ENCODE measurements at regions of chr11 and their contacts with region 1.

Region 1: GRCh38 chr11:61516675-61517572 is 8.4 kb downstream of the LRRC10B start:
- DNase-seq: no peak
- ATAC-seq: peak; percentile 87
- H3K4me3 ChIP-seq: no peak overlapping the region
- H3K27ac ChIP-seq: no peak overlapping the region
- H3K4me1 ChIP-seq: no peaks in the 10 kb centered on the region
- H3K27me3 ChIP-seq: no peaks in the 10 kb centered on the region
- CTCF ChIP-seq: peak; percentile 88 to 99 (median 97)
- EP300 ChIP-seq: no peak
- POLR2A ChIP-seq: no peak
- RAD21 ChIP-seq: peak; percentile 79

Region 2: DNA sequence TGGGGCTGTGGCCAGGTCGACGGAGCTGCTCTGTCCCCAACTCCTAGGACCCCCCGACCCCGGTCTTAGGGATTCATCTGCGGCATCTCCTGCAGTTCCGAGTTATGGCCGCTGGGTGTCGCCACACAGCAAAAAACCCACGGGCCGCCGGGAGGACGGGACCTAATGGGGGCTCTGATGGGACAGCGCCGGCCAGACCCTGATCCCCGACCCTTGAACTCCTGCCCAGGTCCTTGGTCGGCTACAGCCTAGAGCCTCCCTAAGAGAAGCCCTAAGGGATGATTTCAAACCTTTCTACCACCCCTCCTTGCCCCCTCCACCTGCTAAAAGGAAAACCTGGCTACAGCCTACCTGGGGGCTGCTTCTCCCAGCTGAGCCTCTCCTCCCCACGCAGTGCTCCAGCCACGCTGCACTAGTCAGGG is 39.2 kb before region 1 on chr11:
- CTCF ChIA-PET with region 1: interaction called, 67 read pairs
- POLR2A ChIA-PET with region 1: no interaction called
- RAD21 ChIA-PET with region 1: interaction called, 12 read pairs
- SMC1A ChIA-PET with region 1: interaction called, 10 read pairs
- in situ Hi-C with region 1: no loop called
- intact Hi-C with region 1: loop called (anchors 1 kb)
- DNase-seq: no peak
- ATAC-seq: peak; percentile 72
- H3K4me3 ChIP-seq: no peak overlapping the region
- H3K27ac ChIP-seq: no peak overlapping the region
- H3K4me1 ChIP-seq: no peaks in the 10 kb centered on the region
- H3K27me3 ChIP-seq: no peaks in the 10 kb centered on the region
- CTCF ChIP-seq: peak; percentile 86 to 95 (median 89)
- EP300 ChIP-seq: no peak
- POLR2A ChIP-seq: no peak
- RAD21 ChIP-seq: peak; percentile 82

Region 3: DNA sequence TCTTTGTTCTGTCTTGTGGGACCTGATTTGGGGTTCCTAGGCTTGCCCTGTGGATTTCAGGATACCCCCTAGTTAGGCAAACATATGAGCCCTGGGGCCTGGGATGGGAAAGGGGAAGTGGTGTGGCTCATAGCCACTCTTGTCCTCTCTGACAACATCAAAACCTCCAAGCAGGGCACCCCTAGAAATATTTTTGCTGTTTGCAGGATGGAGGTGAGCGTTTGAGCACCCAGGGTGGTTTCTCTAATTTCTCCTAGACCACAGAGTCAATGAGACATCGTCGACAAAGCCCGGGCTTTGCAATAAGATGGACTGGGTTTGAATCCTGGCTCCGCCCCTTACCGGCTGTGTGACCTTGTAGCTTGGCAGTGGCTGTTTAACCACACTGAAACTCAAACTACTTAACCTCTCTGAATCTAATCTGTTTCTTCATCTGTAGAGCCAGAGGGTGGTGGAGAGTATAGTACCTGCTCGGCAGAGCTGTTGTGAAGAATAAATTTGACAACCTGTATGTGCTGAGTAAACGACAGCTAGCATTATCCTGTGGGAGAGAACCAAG is 13.6 kb before region 1 on chr11:
- CTCF ChIA-PET with region 1: interaction called, 15 read pairs
- POLR2A ChIA-PET with region 1: no interaction called
- RAD21 ChIA-PET with region 1: no interaction called
- SMC1A ChIA-PET with region 1: interaction called, 3 read pairs
- in situ Hi-C with region 1: no loop called
- intact Hi-C with region 1: no loop called
- DNase-seq: no peak
- ATAC-seq: no peak
- H3K4me3 ChIP-seq: no peak overlapping the region
- H3K27ac ChIP-seq: no peak overlapping the region
- H3K4me1 ChIP-seq: no peaks in the 10 kb centered on the region
- H3K27me3 ChIP-seq: peaks cover 6 to 9% of the 10 kb centered on the region in 2 experiments
- CTCF ChIP-seq: no peak
- EP300 ChIP-seq: no peak
- POLR2A ChIP-seq: no peak
- RAD21 ChIP-seq: no peak

Region 4: GRCh38 chr11:61526956-61527731 is 10.2 kb after region 1 on chr11:
- CTCF ChIA-PET with region 1: interaction called, 19 read pairs
- POLR2A ChIA-PET with region 1: no interaction called
- RAD21 ChIA-PET with region 1: no interaction called
- SMC1A ChIA-PET with region 1: interaction called, 6 read pairs
- in situ Hi-C with region 1: no loop called
- intact Hi-C with region 1: no loop called
- DNase-seq: no peak
- ATAC-seq: no peak
- H3K4me3 ChIP-seq: no peak overlapping the region
- H3K27ac ChIP-seq: no peak overlapping the region
- H3K4me1 ChIP-seq: no peaks in the 10 kb centered on the region
- H3K27me3 ChIP-seq: peaks cover 0 to 7% of the 10 kb centered on the region in 2 experiments; a peak in 2 of 4 replicates
- CTCF ChIP-seq: no peak
- EP300 ChIP-seq: no peak
- POLR2A ChIP-seq: no peak
- RAD21 ChIP-seq: no peak

Region 5: GRCh38 chr11:61532139-61533038 is 15.5 kb after region 1 on chr11:
- CTCF ChIA-PET with region 1: interaction called, 19 read pairs
- POLR2A ChIA-PET with region 1: no interaction called
- RAD21 ChIA-PET with region 1: no interaction called
- SMC1A ChIA-PET with region 1: no interaction called
- in situ Hi-C with region 1: no loop called
- intact Hi-C with region 1: no loop called
- DNase-seq: no peak
- ATAC-seq: peak; percentile 89
- H3K4me3 ChIP-seq: no peak overlapping the region
- H3K27ac ChIP-seq: no peak overlapping the region
- H3K4me1 ChIP-seq: no peaks in the 10 kb centered on the region
- H3K27me3 ChIP-seq: peaks cover 0 to 1% of the 10 kb centered on the region in 2 experiments; a peak in 1 of 4 replicates
- CTCF ChIP-seq: peak; percentile 76 to 95 (median 91)
- EP300 ChIP-seq: no peak
- POLR2A ChIP-seq: no peak
- RAD21 ChIP-seq: peak; percentile 45; the same call in 1 of the 2 replicates

Region 6: DNA sequence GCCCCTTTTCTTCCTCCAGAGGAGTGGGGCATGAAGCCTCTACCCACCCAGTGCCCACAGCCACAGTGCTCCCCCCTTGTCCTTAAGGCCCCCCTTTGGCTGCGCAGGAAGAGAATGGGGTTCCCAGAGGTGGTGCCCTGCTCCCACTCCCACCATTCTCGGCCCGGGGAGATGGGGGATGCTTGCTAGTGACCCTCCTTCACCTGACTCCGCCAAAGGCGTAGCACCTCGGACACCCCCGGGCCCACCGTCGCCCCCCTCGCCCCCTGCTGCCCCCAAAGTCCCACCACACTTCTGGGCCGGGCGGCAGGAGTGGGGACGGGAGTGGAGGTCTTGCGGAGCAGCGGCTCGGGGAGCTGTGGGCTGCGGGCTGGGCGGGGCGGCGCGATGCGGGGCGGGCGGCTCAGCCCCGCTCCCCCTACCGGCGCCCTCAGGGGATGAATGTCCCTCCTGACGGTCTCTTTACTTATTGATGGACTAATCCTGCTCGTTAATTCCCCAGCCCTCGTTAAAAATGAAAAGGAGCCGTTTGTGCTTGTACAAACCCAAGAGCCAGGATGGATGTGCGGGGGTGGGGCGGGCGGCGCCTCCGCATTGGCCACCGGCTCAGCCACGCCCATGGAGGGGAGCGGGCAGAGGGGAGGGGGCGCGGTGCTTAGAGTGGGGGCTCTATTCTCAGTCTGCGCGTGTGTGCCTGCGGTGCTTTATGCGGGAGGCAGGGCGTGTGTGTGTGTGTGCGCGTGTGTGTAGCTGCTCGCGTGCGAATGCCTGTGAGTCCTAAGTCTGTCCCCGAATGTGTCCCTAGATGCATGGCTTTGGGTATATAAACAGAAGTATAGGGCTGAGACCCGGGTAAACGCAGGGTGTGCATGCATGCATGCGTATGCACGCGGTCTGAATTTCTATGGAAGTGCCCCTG is 38.4 kb after region 1 on chr11:
- CTCF ChIA-PET with region 1: no interaction called
- POLR2A ChIA-PET with region 1: no interaction called
- RAD21 ChIA-PET with region 1: no interaction called
- SMC1A ChIA-PET with region 1: no interaction called
- in situ Hi-C with region 1: no loop called
- intact Hi-C with region 1: no loop called
- DNase-seq: no peak
- ATAC-seq: no peak
- H3K4me3 ChIP-seq: no peak overlapping the region
- H3K27ac ChIP-seq: no peak overlapping the region
- H3K4me1 ChIP-seq: no peaks in the 10 kb centered on the region
- H3K27me3 ChIP-seq: peaks cover 6% of the 10 kb centered on the region in 2 experiments
- CTCF ChIP-seq: no peak
- EP300 ChIP-seq: no peak
- POLR2A ChIP-seq: no peak
- RAD21 ChIP-seq: no peak

Region 7: DNA sequence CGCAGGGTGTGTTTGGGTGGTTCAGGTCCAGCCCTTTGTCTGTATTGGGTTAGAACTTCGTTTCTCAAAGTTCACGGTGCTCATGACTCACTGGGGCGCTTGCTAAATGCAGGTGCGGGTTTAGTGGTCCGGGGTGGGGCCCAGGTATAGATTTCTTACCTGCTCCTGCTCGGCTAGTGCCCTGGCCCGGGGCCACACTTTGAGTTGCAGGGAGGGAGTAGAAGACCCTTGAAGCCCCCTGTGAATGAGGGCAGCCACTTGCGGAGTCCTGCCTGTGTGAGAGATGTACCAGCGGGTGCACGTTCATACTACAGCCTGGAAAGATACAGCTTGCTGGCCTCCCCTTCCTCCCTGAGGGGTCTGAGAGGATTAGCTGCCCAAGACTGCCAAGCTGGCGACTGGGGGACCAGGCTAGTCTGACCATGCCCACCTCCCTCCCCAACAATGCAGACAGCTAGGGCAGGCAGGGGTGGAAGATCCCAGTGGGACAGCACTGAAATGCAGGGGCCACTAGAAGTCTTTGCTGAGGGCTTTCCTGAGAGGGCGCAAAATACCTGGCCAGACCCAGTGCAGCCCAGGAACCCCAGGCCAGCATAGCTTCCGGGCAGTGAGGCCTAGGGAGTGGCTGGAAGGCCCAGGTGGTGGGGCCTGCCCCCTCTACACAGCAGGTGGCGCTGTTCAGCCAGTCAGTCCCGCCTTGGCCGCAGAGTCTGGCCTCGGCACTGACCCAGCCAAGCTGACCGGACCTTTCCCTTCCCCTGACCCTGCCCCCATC is 230.5 kb after region 1 on chr11:
- CTCF ChIA-PET with region 1: no interaction called
- POLR2A ChIA-PET with region 1: no interaction called
- RAD21 ChIA-PET with region 1: no interaction called
- SMC1A ChIA-PET with region 1: no interaction called
- in situ Hi-C with region 1: no loop called
- intact Hi-C with region 1: no loop called
- DNase-seq: no peak
- ATAC-seq: peak; percentile 93
- H3K4me3 ChIP-seq: no peak overlapping the region
- H3K27ac ChIP-seq: no peak overlapping the region
- H3K4me1 ChIP-seq: no peaks in the 10 kb centered on the region; the same call in 1 of the 2 replicates
- H3K27me3 ChIP-seq: peaks cover 0 to 4% of the 10 kb centered on the region in 2 experiments; a peak in 1 of 4 replicates
- CTCF ChIP-seq: peak; percentile 75 to 96 (median 96)
- EP300 ChIP-seq: no peak
- POLR2A ChIP-seq: no peak
- RAD21 ChIP-seq: peak; percentile 55